Activated CD8-positive, alpha-beta T cell treated with anti-CD3 and anti-CD28 coated beads for 36 hours (primary cell): ENCODE measurements at regions of chr3 and their contacts with region 1.

Region 1: DNA sequence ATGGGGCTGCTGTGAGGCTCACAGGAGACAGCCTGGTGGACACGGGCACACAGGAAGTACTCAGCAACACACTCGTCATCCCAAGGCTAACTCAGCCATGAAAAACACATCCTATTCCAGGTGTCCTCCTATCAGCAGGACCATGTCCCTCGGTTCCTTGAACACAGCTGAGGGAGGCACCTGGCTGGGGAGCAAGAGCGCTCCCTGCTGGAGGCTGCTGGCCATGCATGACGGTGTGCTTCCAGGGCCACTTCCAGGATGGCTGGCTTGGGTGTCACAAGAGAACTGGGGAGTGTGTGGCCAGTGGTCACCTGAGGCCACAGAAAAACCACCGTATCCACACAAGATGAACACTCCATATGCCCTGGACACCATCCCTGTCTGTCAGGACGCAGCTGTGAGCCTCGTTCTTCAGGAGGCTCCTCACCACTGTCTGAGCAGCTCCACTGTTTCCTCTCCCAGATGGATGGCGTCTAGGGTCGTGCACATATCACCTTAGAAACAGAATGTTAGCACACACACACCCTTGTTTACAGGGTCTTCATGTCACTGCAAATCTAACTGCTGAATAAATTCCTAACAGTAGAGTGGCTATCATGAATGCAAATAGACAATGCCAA is 31.0 kb downstream of the POC1A start:
- DNase-seq: peak; percentile 79
- ATAC-seq: peak; percentile 94
- H3K4me3 Mint-ChIP-seq: no peak overlapping the region
- H3K27ac Mint-ChIP-seq: no peak overlapping the region
- H3K4me1 Mint-ChIP-seq: peaks cover 6% of the 10 kb centered on the region
- H3K27me3 Mint-ChIP-seq: no peaks in the 10 kb centered on the region
- CTCF ChIP-seq: peak; percentile 96

Region 2: GRCh38 chr3:52108302-52109232 is 14.6 kb before region 1 on chr3:
- CTCF ChIA-PET with region 1: interaction called, 30 read pairs
- POLR2A ChIA-PET with region 1: no interaction called
- intact Hi-C with region 1: no loop called
- DNase-seq: no peak
- ATAC-seq: no peak
- H3K4me3 Mint-ChIP-seq: no peak overlapping the region
- H3K27ac Mint-ChIP-seq: no peak overlapping the region
- H3K4me1 Mint-ChIP-seq: peaks cover 1% of the 10 kb centered on the region
- H3K27me3 Mint-ChIP-seq: no peaks in the 10 kb centered on the region
- CTCF ChIP-seq: no peak

Region 3: DNA sequence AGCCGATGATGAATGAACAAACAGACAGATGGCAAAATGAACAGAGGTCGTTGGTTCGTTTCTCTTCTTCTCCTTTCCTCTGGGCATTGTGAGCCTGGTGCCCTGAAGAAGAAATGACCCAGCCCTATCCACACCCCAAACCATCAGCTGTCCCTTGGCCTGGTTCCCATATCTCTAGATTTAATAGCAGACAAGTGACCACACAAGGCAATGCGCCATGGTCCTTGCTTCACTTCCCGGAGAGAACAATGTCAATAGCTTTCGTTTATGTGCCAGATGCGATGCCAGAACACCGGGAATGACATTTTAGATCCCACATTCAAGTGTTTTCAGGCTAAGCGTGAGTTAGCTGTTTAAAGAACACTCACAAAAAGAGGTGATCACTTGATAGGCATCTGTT is 13.3 kb after region 1 on chr3:
- CTCF ChIA-PET with region 1: interaction called, 12 read pairs
- POLR2A ChIA-PET with region 1: no interaction called
- intact Hi-C with region 1: no loop called
- DNase-seq: no peak
- ATAC-seq: no peak
- H3K4me3 Mint-ChIP-seq: no peak overlapping the region
- H3K27ac Mint-ChIP-seq: no peak overlapping the region
- H3K4me1 Mint-ChIP-seq: no peaks in the 10 kb centered on the region
- H3K27me3 Mint-ChIP-seq: no peaks in the 10 kb centered on the region
- CTCF ChIP-seq: no peak

Region 4: GRCh38 chr3:52144034-52144795 is 21.0 kb after region 1 on chr3:
- CTCF ChIA-PET with region 1: interaction called, 10 read pairs
- POLR2A ChIA-PET with region 1: no interaction called
- intact Hi-C with region 1: no loop called
- DNase-seq: peak; percentile 93
- ATAC-seq: peak; percentile 100
- H3K4me3 Mint-ChIP-seq: no peak overlapping the region
- H3K27ac Mint-ChIP-seq: no peak overlapping the region
- H3K4me1 Mint-ChIP-seq: peaks cover 7% of the 10 kb centered on the region
- H3K27me3 Mint-ChIP-seq: no peaks in the 10 kb centered on the region
- CTCF ChIP-seq: peak; percentile 88

Region 5: DNA sequence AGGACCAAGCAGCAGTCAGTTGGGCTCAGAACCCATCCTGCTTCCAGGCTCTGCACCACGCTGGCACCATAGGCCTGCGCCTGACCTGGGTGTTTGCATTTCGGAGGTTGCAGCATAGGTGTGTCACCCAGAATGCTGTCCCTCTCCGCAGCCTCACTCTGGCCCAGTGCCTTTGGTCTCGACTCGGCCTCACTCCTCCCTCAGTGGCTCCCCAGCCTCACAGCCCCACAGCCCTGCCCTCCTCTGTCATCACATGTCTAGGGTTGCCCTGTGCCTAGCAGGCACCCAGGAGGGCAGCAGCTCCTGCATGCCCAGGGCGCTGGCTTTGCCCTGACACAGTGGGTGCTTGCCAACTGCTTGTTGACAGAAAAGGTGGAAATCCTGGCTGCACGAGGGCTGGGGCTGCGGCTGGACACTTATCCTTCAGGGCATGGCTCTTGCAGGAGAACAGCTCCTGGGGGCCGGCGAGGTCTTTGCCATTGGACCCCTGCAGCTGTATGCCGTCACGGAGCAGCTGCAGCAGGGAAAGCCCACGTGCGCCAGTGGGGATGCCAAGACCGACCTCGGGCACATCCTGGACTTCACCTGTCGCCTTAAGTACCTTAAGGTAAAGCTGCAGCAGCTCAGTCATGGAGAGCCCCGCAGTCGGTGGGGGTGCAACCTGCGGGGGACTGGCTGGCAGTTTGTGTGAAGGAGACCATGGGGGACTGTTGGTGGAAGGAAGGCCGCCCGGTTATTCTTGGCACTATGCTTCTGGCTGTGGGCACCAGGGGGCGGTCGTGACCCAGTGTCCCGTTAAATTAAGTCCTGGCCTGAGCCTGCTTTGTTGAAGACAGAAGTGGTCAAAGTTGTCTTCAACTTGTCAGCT is 348.4 kb after region 1 on chr3:
- CTCF ChIA-PET with region 1: no interaction called
- POLR2A ChIA-PET with region 1: no interaction called
- intact Hi-C with region 1: no loop called
- DNase-seq: peak; percentile 63
- ATAC-seq: peak; percentile 74
- H3K4me3 Mint-ChIP-seq: no peak overlapping the region
- H3K27ac Mint-ChIP-seq: no peak overlapping the region
- H3K4me1 Mint-ChIP-seq: no peaks in the 10 kb centered on the region
- H3K27me3 Mint-ChIP-seq: no peaks in the 10 kb centered on the region
- CTCF ChIP-seq: peak; percentile 37